B cell (primary cell): ENCODE measurements at regions of chr19 and their contacts with region 1.

Region 1: DNA sequence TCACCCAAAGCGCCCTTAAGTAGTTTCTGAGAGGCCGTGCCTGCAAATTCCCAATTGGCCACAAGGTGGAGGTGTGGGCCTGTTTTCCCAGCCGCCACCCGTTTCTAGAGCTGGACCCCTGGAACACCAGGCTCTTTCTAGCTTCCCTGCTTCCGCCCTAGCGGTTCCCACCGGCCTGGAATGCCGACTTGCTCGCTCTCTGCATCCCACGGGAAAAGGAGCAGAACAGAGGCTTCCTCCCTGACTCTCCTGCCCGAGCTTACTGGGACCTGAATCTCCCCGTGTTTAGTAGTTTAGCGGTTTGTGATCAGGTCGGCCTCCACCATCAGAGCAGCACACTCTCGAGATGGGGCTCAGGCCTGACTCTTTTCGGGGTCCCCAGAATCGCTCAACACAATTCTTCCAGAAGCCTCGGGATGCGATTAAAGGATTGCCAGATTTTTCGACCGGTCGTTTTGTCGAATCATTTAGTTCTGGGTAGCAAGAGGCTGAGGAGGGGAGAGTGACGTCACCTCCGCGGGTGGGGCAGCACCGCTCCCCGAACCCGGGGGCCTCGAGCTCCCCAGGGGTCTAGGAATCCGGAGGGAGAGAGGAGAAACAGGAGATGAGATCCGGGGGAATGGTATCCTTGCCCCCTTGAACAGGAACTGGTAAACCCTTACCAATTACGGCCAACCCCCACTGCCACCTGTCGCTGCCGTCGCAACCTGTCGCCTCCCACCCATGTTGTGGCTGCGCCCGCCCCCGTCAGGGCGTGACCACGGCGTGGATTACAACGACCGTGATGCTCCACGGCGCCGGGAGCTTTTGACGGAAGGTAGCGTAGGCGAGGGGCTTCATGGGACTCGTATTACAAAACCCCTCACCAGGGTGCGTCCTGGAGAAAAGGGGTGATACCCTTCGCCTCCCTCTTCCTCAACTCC is 8.0 kb downstream of the NAPSA start:
- DNase-seq: peak; percentile 94
- ATAC-seq: peak; percentile 81
- H3K4me3 ChIP-seq: peak overlapping the region; percentile 64 to 99 (median 68)
- H3K4me3 Mint-ChIP-seq: peak overlapping the region; percentile 94
- H3K27ac ChIP-seq: peak overlapping the region; percentile 95 to 99
- H3K27ac Mint-ChIP-seq: peak overlapping the region; percentile 98
- H3K4me1 ChIP-seq: peaks cover 13 to 34% of the 10 kb centered on the region in 2 donors
- H3K4me1 Mint-ChIP-seq: peaks cover 39% of the 10 kb centered on the region
- H3K27me3 ChIP-seq: no peaks in the 10 kb centered on the region
- H3K27me3 Mint-ChIP-seq: no peaks in the 10 kb centered on the region
- CTCF ChIP-seq: peak; percentile 89

Region 2: DNA sequence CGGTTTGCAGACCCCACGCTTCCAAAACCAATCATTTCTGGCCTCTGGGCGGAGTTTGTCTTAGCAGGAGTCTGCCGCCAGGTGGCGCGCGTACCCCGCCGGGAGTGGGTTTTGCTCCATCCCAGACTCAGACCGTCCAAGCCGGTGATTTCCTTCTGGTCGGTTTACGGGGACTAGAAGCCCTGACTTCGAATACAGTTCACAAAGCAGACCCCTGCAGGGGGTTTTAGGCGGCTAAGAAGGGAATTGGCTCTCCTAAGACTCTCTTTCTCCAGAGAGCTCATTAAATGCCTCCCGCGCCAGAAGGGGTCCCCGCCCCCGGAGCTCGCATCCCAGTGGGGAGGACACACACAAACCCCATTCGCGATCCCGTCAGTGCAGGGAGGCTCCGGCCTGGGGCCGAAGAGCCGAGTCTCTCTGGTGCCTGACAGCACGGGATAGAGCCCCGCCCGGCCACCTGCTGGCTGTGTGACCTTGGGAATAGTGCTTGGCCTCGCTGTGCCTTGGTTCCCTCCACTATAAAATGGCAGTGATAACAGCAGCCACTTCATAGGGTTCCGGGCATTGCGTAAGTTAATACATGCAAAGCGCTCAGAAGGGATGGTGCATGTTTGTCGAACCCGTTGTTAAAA is 419.6 kb before region 1 on chr19:
- CTCF ChIA-PET with region 1: no interaction called
- POLR2A ChIA-PET with region 1: no interaction called
- intact Hi-C with region 1: no loop called
- DNase-seq: peak; percentile 82
- ATAC-seq: peak; percentile 91
- H3K4me3 ChIP-seq: peak overlapping the region in 2 of 5 experiments; percentile 24 to 28
- H3K4me3 Mint-ChIP-seq: no peak overlapping the region
- H3K27ac ChIP-seq: no peak overlapping the region
- H3K27ac Mint-ChIP-seq: no peak overlapping the region
- H3K4me1 ChIP-seq: peaks cover 5 to 11% of the 10 kb centered on the region in 2 donors
- H3K4me1 Mint-ChIP-seq: peaks cover 7% of the 10 kb centered on the region
- H3K27me3 ChIP-seq: no peaks in the 10 kb centered on the region
- H3K27me3 Mint-ChIP-seq: peaks cover 20% of the 10 kb centered on the region
- CTCF ChIP-seq: peak; percentile 94

Region 3: GRCh38 chr19:50329146-50329925 is 28.1 kb before region 1 on chr19 and contains the start of gene KCNC3:
- CTCF ChIA-PET with region 1: interaction called, 28 read pairs
- POLR2A ChIA-PET with region 1: interaction called, 33 read pairs
- intact Hi-C with region 1: loop called (anchors 1 kb)
- DNase-seq: peak; percentile 99
- ATAC-seq: peak; percentile 64
- H3K4me3 ChIP-seq: peak within 1 kb of the TSS in 4 of 5 experiments; percentile 41 to 71 (median 56)
- H3K4me3 Mint-ChIP-seq: peak within 1 kb of the TSS; percentile 91
- H3K27ac ChIP-seq: peak within 1 kb of the TSS; percentile 50 to 77
- H3K27ac Mint-ChIP-seq: peak within 1 kb of the TSS; percentile 94
- H3K4me1 ChIP-seq: peaks cover 62 to 80% of the 10 kb centered on the region in 2 donors
- H3K4me1 Mint-ChIP-seq: peaks cover 79% of the 10 kb centered on the region
- H3K27me3 ChIP-seq: peaks cover 0 to 9% (median 2%) of the 10 kb centered on the region in 4 experiments
- H3K27me3 Mint-ChIP-seq: peaks cover 12% of the 10 kb centered on the region
- CTCF ChIP-seq: no peak
- total RNA-seq, gene KCNC3: 23.0 and 24.4 TPM in 2 replicates

Region 4: GRCh38 chr19:50376166-50377050 is 19.0 kb after region 1 on chr19 and contains the start of gene NR1H2:
- CTCF ChIA-PET with region 1: interaction called, 9 read pairs
- POLR2A ChIA-PET with region 1: interaction called, 5 read pairs
- intact Hi-C with region 1: loop called (anchors 2 kb)
- DNase-seq: peak; percentile 99
- ATAC-seq: peak; percentile 87
- H3K4me3 ChIP-seq: peak within 1 kb of the TSS; percentile 30 to 98 (median 91)
- H3K4me3 Mint-ChIP-seq: peak within 1 kb of the TSS; percentile 97
- H3K27ac ChIP-seq: peak within 1 kb of the TSS; percentile 99 to 100
- H3K27ac Mint-ChIP-seq: peak within 1 kb of the TSS; percentile 99
- H3K4me1 ChIP-seq: peaks cover 6 to 14% of the 10 kb centered on the region in 2 donors
- H3K4me1 Mint-ChIP-seq: peaks cover 19% of the 10 kb centered on the region
- H3K27me3 ChIP-seq: no peaks in the 10 kb centered on the region
- H3K27me3 Mint-ChIP-seq: no peaks in the 10 kb centered on the region
- CTCF ChIP-seq: no peak
- total RNA-seq, gene NR1H2: 116 and 118 TPM in 2 replicates

Region 5: DNA sequence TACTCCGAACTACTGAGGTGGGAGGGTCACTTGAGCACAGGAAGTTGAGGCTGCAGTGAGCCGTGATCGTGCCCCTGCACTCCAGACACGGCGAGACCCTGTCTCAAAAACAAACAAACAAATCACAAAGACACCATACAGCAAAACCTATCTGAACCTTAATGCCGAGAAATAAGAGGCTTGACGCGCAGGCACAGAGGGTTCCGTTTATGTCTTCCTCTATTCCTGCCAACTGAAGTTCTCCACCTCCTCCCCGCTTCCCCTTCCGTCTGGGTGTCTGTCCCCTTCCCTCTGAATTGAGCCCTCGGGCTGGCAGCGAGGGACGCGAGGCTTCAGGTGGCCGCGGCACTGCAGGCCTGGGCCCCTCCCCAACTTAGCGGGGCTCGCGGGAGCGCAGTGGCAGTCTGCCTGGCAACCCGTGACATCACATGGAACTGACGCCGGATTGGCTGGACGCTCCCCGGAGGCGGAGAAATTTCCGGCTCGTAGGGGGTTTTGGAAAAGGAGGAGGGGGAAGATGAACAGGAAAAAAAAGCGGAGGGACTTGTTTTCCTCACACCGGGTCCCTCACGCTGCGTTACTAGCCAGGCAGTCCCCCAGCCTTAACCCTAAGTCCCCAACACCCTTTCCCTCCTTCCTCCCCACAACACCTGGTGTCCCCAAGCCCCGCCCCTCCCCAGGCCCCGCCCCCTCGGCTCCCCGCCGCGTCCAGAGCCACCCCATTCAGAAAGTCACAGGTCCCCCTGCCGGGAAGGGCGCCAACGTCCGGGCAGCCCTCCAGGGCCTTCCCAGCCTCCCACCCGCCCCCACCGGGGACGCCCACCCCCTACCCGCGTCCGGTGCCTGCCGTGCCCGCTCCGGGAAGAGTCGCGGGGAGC is 74.1 kb after region 1 on chr19:
- CTCF ChIA-PET with region 1: interaction called, 5 read pairs
- POLR2A ChIA-PET with region 1: interaction called, 4 read pairs
- intact Hi-C with region 1: loop called (anchors 5 kb)
- DNase-seq: peak; percentile 96
- ATAC-seq: peak; percentile 65
- H3K4me3 ChIP-seq: peak overlapping the region; percentile 35 to 66 (median 61)
- H3K4me3 Mint-ChIP-seq: peak overlapping the region; percentile 97
- H3K27ac ChIP-seq: peak overlapping the region; percentile 97 to 99
- H3K27ac Mint-ChIP-seq: peak overlapping the region; percentile 99
- H3K4me1 ChIP-seq: peaks cover 70 to 93% of the 10 kb centered on the region in 2 donors
- H3K4me1 Mint-ChIP-seq: peaks cover 84% of the 10 kb centered on the region
- H3K27me3 ChIP-seq: no peaks in the 10 kb centered on the region
- H3K27me3 Mint-ChIP-seq: no peaks in the 10 kb centered on the region
- CTCF ChIP-seq: no peak

Region 6: GRCh38 chr19:50556282-50557008 is 199.0 kb after region 1 on chr19:
- CTCF ChIA-PET with region 1: interaction called, 14 read pairs
- POLR2A ChIA-PET with region 1: no interaction called
- intact Hi-C with region 1: no loop called
- DNase-seq: peak; percentile 81
- ATAC-seq: peak; percentile 59
- H3K4me3 ChIP-seq: peak overlapping the region in 4 of 5 experiments; percentile 35 to 55 (median 54)
- H3K4me3 Mint-ChIP-seq: peak overlapping the region; percentile 88
- H3K27ac ChIP-seq: no peak overlapping the region
- H3K27ac Mint-ChIP-seq: no peak overlapping the region
- H3K4me1 ChIP-seq: peaks cover 13 to 14% of the 10 kb centered on the region in 2 donors
- H3K4me1 Mint-ChIP-seq: peaks cover 5% of the 10 kb centered on the region
- H3K27me3 ChIP-seq: peaks cover 0 to 63% (median 13%) of the 10 kb centered on the region in 4 experiments
- H3K27me3 Mint-ChIP-seq: peaks cover 55% of the 10 kb centered on the region
- CTCF ChIP-seq: peak; percentile 83

Region 7: GRCh38 chr19:50896591-50897190 is 539.3 kb after region 1 on chr19:
- CTCF ChIA-PET with region 1: interaction called, 4 read pairs
- POLR2A ChIA-PET with region 1: no interaction called
- intact Hi-C with region 1: loop called (anchors 5 kb)
- DNase-seq: peak; percentile 90
- ATAC-seq: peak; percentile 90
- H3K4me3 ChIP-seq: no peak overlapping the region
- H3K4me3 Mint-ChIP-seq: peak overlapping the region; percentile 66
- H3K27ac ChIP-seq: peak overlapping the region; percentile 78 to 84
- H3K27ac Mint-ChIP-seq: peak overlapping the region; percentile 94
- H3K4me1 ChIP-seq: peaks cover 20 to 26% of the 10 kb centered on the region in 2 donors
- H3K4me1 Mint-ChIP-seq: peaks cover 53% of the 10 kb centered on the region
- H3K27me3 ChIP-seq: no peaks in the 10 kb centered on the region
- H3K27me3 Mint-ChIP-seq: no peaks in the 10 kb centered on the region
- CTCF ChIP-seq: no peak